PC-9 (cell line): ENCODE measurements at regions of chr9 and their contacts with region 1.

Region 1: GRCh38 chr9:97598461-97599288 is 34.5 kb downstream of the TSTD2 start:
- DNase-seq: peak; percentile 69 to 74
- H3K4me3 ChIP-seq: no peak overlapping the region
- H3K27ac ChIP-seq: no peak overlapping the region
- H3K4me1 ChIP-seq: no peaks in the 10 kb centered on the region
- H3K27me3 ChIP-seq: no peaks in the 10 kb centered on the region
- CTCF ChIP-seq: peak; percentile 88

Region 2: DNA sequence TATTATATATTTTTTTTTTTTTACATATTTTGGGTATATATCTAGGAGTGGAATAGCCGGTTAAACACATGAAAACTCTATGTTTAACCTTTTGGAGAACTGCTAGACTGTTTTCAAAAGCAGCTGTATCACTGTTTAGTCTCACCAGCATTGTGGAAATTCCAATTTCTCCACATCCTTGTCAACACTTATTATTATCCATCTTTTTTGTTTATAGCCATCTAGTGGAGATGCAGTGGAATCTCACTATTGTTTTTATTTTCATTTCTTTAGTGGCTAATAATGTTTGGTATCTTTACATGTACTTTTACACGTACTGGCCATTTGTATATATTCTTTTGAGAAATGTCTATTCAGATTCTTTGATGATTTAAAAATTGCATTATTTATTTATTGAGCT is 313.9 kb before region 1 on chr9:
- CTCF ChIA-PET with region 1: no interaction called
- POLR2A ChIA-PET with region 1: no interaction called
- intact Hi-C with region 1: no loop called
- DNase-seq: no peak
- H3K4me3 ChIP-seq: no peak overlapping the region
- H3K27ac ChIP-seq: no peak overlapping the region
- H3K4me1 ChIP-seq: no peaks in the 10 kb centered on the region
- H3K27me3 ChIP-seq: no peaks in the 10 kb centered on the region
- CTCF ChIP-seq: no peak; the same call in 1 of the 2 replicates

Region 3: DNA sequence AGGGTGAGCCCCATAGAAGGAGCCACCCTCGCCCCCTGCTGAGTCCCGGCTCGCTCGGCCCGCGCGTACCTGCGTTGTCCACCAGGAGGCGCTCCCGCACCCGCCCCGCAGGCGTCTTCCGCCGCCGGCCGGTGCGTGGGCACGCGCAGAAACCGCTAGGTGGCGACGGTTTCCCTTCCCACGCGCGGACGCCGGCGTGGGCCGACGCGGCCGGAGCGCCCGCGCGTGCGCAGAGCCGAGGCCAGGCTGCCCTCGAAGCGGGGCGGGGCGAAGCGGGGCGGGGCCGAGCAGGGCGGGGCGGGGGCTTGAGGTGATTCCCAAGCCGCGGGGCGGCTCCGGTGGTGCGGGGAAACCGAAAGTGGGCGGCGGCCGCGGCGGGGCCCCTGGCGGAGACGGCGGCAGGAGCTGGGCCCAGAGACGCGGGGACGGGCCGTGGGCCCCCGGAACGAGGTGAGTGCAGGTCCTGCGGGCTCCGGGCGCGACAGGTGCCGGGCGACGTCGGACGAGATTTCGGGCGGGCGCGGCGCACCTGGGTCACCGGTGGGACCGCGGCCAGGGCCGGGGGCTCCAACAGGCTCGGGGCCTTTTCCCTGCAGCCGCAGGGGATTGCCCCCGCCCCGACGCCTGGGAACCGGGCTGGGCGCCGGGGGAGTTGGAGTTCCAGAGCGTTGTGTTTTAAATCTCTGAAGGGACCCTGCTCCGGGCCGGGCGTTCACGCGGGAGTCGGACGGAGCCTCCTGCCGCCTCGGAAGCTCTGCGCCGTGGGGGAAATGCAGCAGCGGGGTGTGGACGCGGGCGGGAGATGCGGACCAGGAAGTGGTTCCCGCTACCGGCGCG is 186.7 kb before region 1 on chr9 and contains the start of gene TDRD7:
- CTCF ChIA-PET with region 1: interaction called, 10 read pairs
- POLR2A ChIA-PET with region 1: no interaction called
- intact Hi-C with region 1: loop called (anchors 5 kb)
- DNase-seq: peak; percentile 56 to 88
- H3K4me3 ChIP-seq: peak within 1 kb of the TSS; percentile 89
- H3K27ac ChIP-seq: no peak within 1 kb of the TSS
- H3K4me1 ChIP-seq: peaks cover 8% of the 10 kb centered on the region
- H3K27me3 ChIP-seq: peaks cover 10% of the 10 kb centered on the region; the same call in 1 of the 2 replicates
- CTCF ChIP-seq: peak; percentile 80
- total RNA-seq, gene TDRD7: 11.9 and 14.2 TPM in 2 replicates

Region 4: DNA sequence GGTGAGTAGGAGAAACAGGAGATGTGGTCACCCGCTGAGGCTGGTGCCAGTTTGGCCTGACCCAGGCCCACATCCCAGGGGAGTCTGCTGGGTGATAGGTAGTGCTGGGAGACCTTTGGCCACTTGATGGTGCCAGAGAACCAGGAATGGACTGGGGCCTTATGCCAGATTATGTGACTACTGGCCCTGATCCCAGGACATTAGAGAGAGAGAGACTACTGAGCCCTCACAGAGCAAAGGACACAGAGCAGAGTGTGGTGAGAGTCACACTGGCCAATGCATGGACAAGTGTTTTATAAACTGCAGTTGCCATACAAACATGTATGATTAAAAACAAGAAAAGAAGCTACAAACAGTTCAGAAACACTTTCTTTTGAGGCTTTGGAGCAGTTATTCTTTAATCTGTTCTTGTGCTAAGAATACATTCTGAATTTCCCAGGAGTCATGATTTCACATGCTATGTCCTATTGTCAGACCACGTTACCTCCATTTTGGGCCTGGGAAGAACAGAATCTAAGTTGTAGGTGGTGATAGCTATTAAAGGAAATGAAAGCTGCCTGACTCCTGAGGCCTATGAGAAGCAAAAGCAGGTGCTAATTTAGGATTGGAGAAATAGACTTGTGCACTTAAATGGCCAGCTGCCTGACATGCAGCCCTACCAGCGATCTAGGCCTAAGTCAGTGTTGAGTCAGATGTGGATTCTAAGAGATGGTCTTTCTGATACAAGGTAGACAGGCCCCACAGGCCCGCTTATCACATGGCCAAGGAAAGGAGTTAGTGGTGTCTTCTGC is 129.8 kb before region 1 on chr9:
- CTCF ChIA-PET with region 1: interaction called, 34 read pairs
- POLR2A ChIA-PET with region 1: no interaction called
- intact Hi-C with region 1: loop called (anchors 1 kb)
- DNase-seq: peak in 1 of 2 experiments; percentile 67
- H3K4me3 ChIP-seq: no peak overlapping the region
- H3K27ac ChIP-seq: no peak overlapping the region
- H3K4me1 ChIP-seq: no peaks in the 10 kb centered on the region
- H3K27me3 ChIP-seq: no peaks in the 10 kb centered on the region
- CTCF ChIP-seq: peak; percentile 85

Region 5: GRCh38 chr9:97501177-97501971 is 97.3 kb before region 1 on chr9 and contains the start of gene TMOD1:
- CTCF ChIA-PET with region 1: interaction called, 8 read pairs
- POLR2A ChIA-PET with region 1: no interaction called
- intact Hi-C with region 1: loop called (anchors 1 kb)
- DNase-seq: peak; percentile 39 to 76
- H3K4me3 ChIP-seq: peak within 1 kb of the TSS; percentile 93
- H3K27ac ChIP-seq: no peak within 1 kb of the TSS
- H3K4me1 ChIP-seq: peaks cover 4% of the 10 kb centered on the region; the same call in 1 of the 2 replicates
- H3K27me3 ChIP-seq: no peaks in the 10 kb centered on the region
- CTCF ChIP-seq: no peak
- total RNA-seq, gene TMOD1: 6.8 and 7.1 TPM in 2 replicates

Region 6: GRCh38 chr9:97511762-97512429 is 86.8 kb before region 1 on chr9:
- CTCF ChIA-PET with region 1: no interaction called
- POLR2A ChIA-PET with region 1: no interaction called
- intact Hi-C with region 1: no loop called
- DNase-seq: peak; percentile 45 to 84
- H3K4me3 ChIP-seq: no peak overlapping the region; the same call in 1 of the 2 replicates
- H3K27ac ChIP-seq: peak overlapping the region; percentile 73
- H3K4me1 ChIP-seq: peaks cover 18% of the 10 kb centered on the region
- H3K27me3 ChIP-seq: no peaks in the 10 kb centered on the region
- CTCF ChIP-seq: no peak

Region 7: DNA sequence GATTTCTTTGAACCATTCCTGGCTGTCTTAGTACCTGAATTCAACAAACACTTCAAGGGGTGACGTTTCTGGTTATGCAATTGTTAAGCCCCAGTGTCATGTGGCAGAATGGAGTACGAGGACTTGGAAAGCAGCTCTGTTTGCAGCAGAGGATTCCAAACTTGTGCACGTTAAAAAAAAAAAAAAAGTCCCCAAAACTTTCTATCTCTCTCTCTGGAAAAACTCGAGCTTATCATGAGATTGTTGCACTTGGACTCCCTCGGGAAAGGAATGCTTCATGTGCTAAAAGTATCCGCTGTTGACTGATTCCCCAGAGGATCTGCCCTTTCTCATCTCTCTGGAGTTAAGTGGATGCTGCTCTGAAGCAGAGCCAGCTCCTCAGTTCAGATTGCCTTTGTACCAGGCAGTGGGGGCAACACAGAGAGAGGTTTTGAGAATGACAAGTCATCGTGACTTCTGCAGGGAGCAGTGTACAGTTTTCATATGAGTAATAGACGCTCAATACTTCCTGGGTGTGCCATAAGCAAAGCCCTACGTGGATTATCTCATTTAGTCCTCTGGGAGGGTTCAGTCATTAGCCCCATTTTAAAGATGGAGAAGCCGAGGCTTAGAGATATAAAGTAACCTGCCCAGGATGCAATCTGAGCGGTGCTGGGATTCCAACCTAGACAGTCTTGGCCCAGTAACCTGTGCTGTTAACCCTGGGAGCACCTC is 69.2 kb before region 1 on chr9:
- CTCF ChIA-PET with region 1: interaction called, 4 read pairs
- POLR2A ChIA-PET with region 1: no interaction called
- intact Hi-C with region 1: loop called (anchors 2 kb)
- DNase-seq: peak; percentile 47 to 73
- H3K4me3 ChIP-seq: no peak overlapping the region
- H3K27ac ChIP-seq: peak overlapping the region; percentile 85
- H3K4me1 ChIP-seq: peaks cover 54% of the 10 kb centered on the region
- H3K27me3 ChIP-seq: no peaks in the 10 kb centered on the region
- CTCF ChIP-seq: no peak

Region 8: GRCh38 chr9:97990266-97990665 is 391.6 kb after region 1 on chr9:
- CTCF ChIA-PET with region 1: interaction called, 11 read pairs
- POLR2A ChIA-PET with region 1: no interaction called
- intact Hi-C with region 1: no loop called
- DNase-seq: peak; percentile 27 to 68
- H3K4me3 ChIP-seq: no peak overlapping the region
- H3K27ac ChIP-seq: peak overlapping the region; percentile 42
- H3K4me1 ChIP-seq: peaks cover 54% of the 10 kb centered on the region
- H3K27me3 ChIP-seq: no peaks in the 10 kb centered on the region
- CTCF ChIP-seq: no peak